Activated CD8-positive, alpha-beta T cell treated with anti-CD3 and anti-CD28 coated beads for 36 hours (primary cell): ENCODE measurements at regions of chr11 and their contacts with region 1.

Region 1: GRCh38 chr11:46616998-46617675 is at the starts of genes ATG13 and HARBI1:
- DNase-seq: peak; percentile 95
- ATAC-seq: peak; percentile 94
- H3K4me3 Mint-ChIP-seq: peak within 1 kb of the TSS; percentile 87
- H3K27ac Mint-ChIP-seq: peak within 1 kb of the TSS; percentile 99
- H3K4me1 Mint-ChIP-seq: peaks cover 38% of the 10 kb centered on the region
- H3K27me3 Mint-ChIP-seq: no peaks in the 10 kb centered on the region
- CTCF ChIP-seq: no peak
- total RNA-seq, gene ATG13: 53.4 to 61.2 TPM
- total RNA-seq, gene HARBI1: 3.1 to 3.3 TPM

Region 2: GRCh38 chr11:46392421-46393230 is 224.5 kb before region 1 on chr11:
- CTCF ChIA-PET with region 1: interaction called, 10 read pairs
- POLR2A ChIA-PET with region 1: no interaction called
- intact Hi-C with region 1: no loop called
- DNase-seq: peak; percentile 81
- ATAC-seq: peak; percentile 85
- H3K4me3 Mint-ChIP-seq: peak overlapping the region; percentile 65
- H3K27ac Mint-ChIP-seq: no peak overlapping the region
- H3K4me1 Mint-ChIP-seq: peaks cover 24% of the 10 kb centered on the region
- H3K27me3 Mint-ChIP-seq: peaks cover 41% of the 10 kb centered on the region
- CTCF ChIP-seq: no peak

Region 3: DNA sequence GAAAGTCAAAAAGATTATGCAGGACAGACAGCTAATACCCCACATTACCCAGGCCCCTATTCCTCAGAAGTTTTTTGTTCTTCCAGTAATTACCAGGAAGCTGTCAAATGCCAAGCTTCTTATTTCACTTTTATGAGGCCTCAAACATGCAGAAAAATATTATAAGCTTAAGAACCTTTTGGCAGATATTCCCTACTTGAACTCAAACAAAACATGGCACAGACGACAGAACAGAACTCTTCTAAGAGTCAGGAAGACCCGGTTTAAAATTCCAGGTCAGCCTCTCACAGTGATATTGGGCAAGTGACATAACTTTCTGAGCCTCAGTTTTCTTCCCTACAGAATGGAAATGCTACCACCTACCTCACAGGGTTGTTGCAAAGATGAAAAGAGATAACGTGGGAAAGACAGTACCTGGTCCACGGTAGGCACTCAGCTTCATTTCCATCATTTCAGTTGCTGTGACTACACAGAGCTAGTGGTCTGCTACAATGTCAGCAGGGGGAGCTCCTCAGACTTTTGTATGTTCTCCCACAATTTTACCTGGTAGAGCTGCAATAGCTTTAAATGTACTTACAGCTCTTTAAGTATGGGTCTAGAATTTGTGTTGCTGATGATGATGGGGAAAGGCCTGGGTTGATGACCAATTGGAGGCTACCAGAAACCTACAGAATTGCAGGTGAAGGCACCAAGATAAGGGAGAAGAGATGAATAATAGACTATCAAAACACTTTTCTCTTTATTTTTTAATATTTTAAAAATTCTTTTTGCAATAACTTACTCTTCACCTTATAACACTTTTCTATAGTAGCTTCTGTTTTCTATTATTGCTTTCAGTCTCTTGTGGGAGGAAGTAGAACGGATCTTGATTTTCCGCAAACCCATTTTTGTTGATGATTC is 127.2 kb before region 1 on chr11:
- CTCF ChIA-PET with region 1: interaction called, 13 read pairs
- POLR2A ChIA-PET with region 1: no interaction called
- intact Hi-C with region 1: no loop called
- DNase-seq: peak; percentile 54
- ATAC-seq: peak; percentile 76
- H3K4me3 Mint-ChIP-seq: no peak overlapping the region
- H3K27ac Mint-ChIP-seq: no peak overlapping the region
- H3K4me1 Mint-ChIP-seq: peaks cover 3% of the 10 kb centered on the region
- H3K27me3 Mint-ChIP-seq: no peaks in the 10 kb centered on the region
- CTCF ChIP-seq: peak; percentile 71

Region 4: DNA sequence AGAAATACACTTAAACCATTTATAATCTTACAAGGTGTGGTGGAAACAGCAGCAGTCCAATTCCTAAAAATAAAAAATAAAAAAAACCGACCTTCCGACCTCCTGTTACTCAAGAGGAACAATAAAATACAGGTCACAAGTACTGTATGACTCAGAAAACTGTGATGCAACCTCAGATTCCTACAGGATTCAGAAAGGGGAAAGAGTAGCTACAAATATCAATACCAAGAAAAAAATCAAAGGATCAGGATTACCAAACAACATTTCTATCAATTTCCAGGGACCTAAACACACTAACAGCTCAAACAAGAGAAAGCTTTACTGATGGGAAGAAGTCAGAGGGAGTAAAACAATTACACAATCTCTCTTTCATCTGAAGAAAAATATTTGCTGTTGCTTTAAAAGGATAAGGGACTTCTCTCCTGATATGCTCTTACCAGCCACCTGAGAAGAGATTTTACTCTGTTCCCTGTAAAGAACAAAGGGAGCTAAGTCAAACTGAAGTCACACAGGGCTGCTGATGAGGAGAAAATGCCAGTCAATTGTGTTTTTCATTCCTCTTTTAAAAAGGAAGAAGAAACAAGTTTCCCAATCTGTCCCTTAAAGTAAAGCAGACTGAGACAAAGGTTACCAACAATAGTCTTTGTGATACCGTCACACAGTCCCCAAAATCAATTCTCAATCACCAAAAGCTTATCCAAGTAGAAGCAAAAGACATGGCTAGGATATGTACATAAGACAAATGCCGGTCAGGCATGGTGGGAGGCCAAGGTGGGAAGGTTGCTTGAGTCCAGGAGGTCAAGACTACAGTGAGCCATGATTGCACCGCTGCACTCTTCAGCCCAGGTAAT is 62.7 kb before region 1 on chr11:
- CTCF ChIA-PET with region 1: interaction called, 16 read pairs
- POLR2A ChIA-PET with region 1: no interaction called
- intact Hi-C with region 1: no loop called
- DNase-seq: no peak
- ATAC-seq: no peak
- H3K4me3 Mint-ChIP-seq: no peak overlapping the region
- H3K27ac Mint-ChIP-seq: peak overlapping the region; percentile 3
- H3K4me1 Mint-ChIP-seq: peaks cover 47% of the 10 kb centered on the region
- H3K27me3 Mint-ChIP-seq: no peaks in the 10 kb centered on the region
- CTCF ChIP-seq: no peak

Region 5: GRCh38 chr11:46560300-46560991 is 56.7 kb before region 1 on chr11:
- CTCF ChIA-PET with region 1: interaction called, 16 read pairs
- POLR2A ChIA-PET with region 1: no interaction called
- intact Hi-C with region 1: no loop called
- DNase-seq: peak; percentile 43
- ATAC-seq: peak; percentile 45
- H3K4me3 Mint-ChIP-seq: peak overlapping the region; percentile 76
- H3K27ac Mint-ChIP-seq: peak overlapping the region; percentile 90
- H3K4me1 Mint-ChIP-seq: peaks cover 62% of the 10 kb centered on the region
- H3K27me3 Mint-ChIP-seq: no peaks in the 10 kb centered on the region
- CTCF ChIP-seq: no peak

Region 6: GRCh38 chr11:46593550-46594373 is 23.4 kb before region 1 on chr11 and contains the start of gene AMBRA1:
- CTCF ChIA-PET with region 1: interaction called, 5 read pairs
- POLR2A ChIA-PET with region 1: interaction called, 16 read pairs
- intact Hi-C with region 1: no loop called
- DNase-seq: peak; percentile 95
- ATAC-seq: peak; percentile 92
- H3K4me3 Mint-ChIP-seq: peak within 1 kb of the TSS; percentile 97
- H3K27ac Mint-ChIP-seq: peak within 1 kb of the TSS; percentile 95
- H3K4me1 Mint-ChIP-seq: peaks cover 36% of the 10 kb centered on the region
- H3K27me3 Mint-ChIP-seq: no peaks in the 10 kb centered on the region
- CTCF ChIP-seq: no peak
- total RNA-seq, gene AMBRA1: 24.0 to 24.1 TPM

Region 7: DNA sequence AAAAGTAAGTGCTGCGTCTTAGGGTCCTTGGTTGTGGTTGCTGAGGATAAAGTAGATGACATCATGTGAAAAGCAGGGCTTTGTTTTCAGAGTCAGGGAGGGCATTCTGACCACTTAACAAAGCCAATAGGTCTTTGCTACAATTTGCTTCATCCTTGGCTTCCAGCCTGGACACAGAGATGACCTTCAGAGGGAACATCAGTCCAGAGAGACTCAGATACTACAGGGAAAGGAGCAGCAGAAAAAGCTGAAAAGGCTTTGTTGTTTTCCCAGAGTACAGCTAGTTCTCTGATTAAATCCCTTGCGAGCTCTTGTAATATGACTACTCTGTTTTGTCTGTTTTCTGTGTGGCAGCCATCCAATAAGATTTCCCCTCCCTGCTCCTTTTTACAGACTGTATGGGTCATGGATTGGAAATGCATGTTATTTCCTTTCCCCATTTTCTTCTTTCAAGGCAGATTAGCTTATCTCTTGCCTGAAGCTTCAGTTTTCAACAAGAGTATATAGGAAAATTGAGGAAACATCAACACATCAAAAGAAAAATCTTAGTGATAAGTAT is 32.1 kb after region 1 on chr11:
- CTCF ChIA-PET with region 1: no interaction called
- POLR2A ChIA-PET with region 1: no interaction called
- intact Hi-C with region 1: no loop called
- DNase-seq: no peak
- ATAC-seq: no peak
- H3K4me3 Mint-ChIP-seq: no peak overlapping the region
- H3K27ac Mint-ChIP-seq: no peak overlapping the region
- H3K4me1 Mint-ChIP-seq: no peaks in the 10 kb centered on the region
- H3K27me3 Mint-ChIP-seq: no peaks in the 10 kb centered on the region
- CTCF ChIP-seq: no peak

Region 8: GRCh38 chr11:46682773-46683752 is 65.9 kb after region 1 on chr11:
- CTCF ChIA-PET with region 1: no interaction called
- POLR2A ChIA-PET with region 1: no interaction called
- intact Hi-C with region 1: no loop called
- DNase-seq: no peak
- ATAC-seq: no peak
- H3K4me3 Mint-ChIP-seq: no peak overlapping the region
- H3K27ac Mint-ChIP-seq: no peak overlapping the region
- H3K4me1 Mint-ChIP-seq: no peaks in the 10 kb centered on the region
- H3K27me3 Mint-ChIP-seq: no peaks in the 10 kb centered on the region
- CTCF ChIP-seq: no peak